AG04449 (cell line): ENCODE measurements at regions of chr2 and their contacts with region 1.

Region 1: DNA sequence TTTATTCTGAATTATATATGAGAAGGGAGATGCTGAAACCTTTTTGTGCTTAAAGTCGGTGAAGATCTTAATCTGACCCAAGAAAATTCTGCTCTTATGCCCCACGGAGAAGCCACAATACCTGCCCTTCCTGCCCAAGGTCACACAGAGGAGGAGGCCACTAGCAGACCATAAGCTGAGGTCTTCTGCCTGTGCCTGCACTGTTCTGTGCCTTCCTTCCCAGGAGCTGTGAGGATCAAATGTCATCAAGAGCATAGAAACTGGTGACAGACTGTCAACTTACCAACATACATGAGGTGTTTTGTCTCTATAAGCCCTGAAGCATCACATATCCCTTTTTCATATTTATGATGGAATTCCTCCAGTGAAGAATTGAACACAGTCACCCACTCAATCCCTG is 233.3 kb downstream of the C1D start:
- DNase-seq: no peak
- H3K4me3 ChIP-seq: no peak overlapping the region
- CTCF ChIP-seq: no peak

Region 2: GRCh38 chr2:67846370-67847070 is 17.1 kb after region 1 on chr2:
- CTCF ChIA-PET with region 1: interaction called, 10 read pairs
- POLR2A ChIA-PET with region 1: no interaction called
- DNase-seq: peak; percentile 84
- H3K4me3 ChIP-seq: peak overlapping the region; percentile 30; the same call in 1 of the 2 replicates
- CTCF ChIP-seq: peak; percentile 58